Left ventricle myocardium inferior (tissue), 1 donor: ENCODE measurements at regions of chr3 and their contacts with region 1.

Region 1: DNA sequence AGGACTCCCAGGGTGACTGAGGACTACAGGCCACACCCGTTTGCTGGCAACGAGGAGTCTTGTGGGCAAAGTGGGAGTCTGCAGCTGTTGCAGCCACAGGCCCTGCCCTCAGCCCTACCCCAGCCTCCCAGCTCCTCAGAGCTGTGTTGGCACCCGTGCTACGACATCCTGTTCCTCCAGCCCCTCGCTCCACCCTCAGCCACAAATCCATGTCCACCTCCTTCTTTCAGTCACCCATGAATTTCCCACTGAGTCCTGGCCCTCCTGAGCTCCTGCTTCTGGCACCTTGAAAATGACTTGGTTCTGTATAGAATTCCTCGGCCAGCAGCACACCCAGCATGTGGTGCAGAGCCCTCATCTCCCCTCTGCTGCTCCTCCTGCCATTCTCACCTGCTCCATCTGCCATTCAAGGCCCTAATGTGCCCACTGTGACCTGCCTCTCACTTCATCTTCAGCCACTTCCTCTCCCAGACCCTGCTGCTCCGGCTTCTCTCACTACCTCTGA is 20.9 kb upstream of the VILL start:
- DNase-seq: no peak
- H3K4me3 ChIP-seq: no peak overlapping the region
- H3K27ac ChIP-seq: peak overlapping the region; percentile 72
- H3K4me1 ChIP-seq: peaks cover 49% of the 10 kb centered on the region
- H3K27me3 ChIP-seq: no peaks in the 10 kb centered on the region
- CTCF ChIP-seq: no peak

Region 2: DNA sequence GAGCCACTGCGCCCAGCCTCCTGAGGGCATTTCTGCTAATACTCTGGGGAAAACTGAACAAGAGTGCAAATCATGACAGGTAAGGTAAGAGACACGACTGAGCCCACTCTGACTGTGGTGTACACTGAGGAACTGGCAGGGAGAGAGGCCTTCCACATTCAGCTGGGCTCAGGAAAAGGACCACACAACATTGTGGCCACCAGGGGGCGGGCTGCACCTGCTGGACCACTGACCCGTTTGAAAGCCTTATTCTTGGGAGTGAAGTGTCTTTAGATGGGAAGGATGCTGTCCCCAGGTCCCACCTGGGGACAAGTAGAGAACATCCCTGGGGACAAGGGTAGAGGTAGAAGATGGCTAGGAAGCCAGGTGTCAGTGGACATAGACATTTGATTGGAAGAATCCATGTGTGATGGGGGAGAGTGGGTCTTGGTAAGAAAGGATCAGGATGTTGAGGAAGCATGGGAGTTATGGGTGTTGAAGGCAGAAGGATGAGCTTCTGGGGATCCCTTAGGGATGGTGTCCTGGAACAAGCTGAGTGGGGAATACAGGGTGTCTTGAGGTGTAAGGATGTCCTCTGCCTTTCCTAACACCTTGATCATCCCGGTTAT is 114.2 kb before region 1 on chr3:
- intact Hi-C with region 1: loop called (anchors 2 kb)
- DNase-seq: peak; percentile 89
- H3K4me3 ChIP-seq: no peak overlapping the region
- H3K27ac ChIP-seq: peak overlapping the region; percentile 58
- H3K4me1 ChIP-seq: peaks cover 28% of the 10 kb centered on the region
- H3K27me3 ChIP-seq: no peaks in the 10 kb centered on the region
- CTCF ChIP-seq: peak; percentile 95

Region 3: DNA sequence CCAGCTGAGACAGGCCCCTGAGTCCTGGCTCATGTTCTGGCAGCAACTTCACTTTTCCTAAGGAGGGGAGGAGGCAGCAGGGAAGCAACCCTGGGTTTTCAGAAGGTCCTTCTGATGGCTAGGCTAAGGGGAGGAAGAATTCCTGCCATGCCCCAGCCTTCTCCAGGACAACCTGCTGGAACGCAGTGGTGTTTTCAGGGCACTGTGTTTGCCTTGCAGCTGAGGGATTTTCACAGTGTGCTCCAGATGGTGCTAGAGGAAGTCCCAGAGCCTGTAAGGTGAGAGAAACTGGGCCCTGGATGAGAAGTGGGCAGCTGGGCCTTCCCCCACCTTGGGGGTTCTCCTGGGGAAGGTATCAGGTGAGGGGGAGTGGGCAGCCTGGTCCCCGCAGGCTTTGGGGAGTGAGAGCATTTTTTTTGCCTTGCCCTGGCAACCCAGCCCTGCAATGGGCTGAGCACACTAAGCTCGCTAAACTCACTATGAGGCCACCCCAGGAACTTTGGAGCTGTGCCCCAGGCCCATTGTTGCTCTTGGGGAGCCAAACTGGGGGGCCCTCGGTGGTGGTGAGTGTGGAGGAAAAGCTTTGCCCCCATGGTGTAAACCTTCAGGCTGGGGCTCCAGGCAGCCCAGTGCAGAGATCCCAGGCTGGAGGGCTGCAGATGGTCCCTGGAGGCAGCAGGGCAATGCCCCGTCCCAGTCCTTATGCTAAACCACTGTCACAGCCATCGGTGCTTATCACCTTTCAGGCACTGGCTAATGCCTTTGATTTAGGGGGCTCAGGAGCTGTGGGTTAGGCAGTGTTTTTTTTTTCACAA is 126.2 kb after region 1 on chr3:
- intact Hi-C with region 1: no loop called
- DNase-seq: no peak
- H3K4me3 ChIP-seq: no peak overlapping the region
- H3K27ac ChIP-seq: no peak overlapping the region
- H3K4me1 ChIP-seq: no peaks in the 10 kb centered on the region
- H3K27me3 ChIP-seq: peaks cover 63% of the 10 kb centered on the region
- CTCF ChIP-seq: no peak

Region 4: GRCh38 chr3:39065197-39065596 is 1095.5 kb after region 1 on chr3:
- intact Hi-C with region 1: no loop called
- DNase-seq: no peak
- H3K4me3 ChIP-seq: no peak overlapping the region
- H3K27ac ChIP-seq: no peak overlapping the region
- H3K4me1 ChIP-seq: no peaks in the 10 kb centered on the region
- H3K27me3 ChIP-seq: no peaks in the 10 kb centered on the region
- CTCF ChIP-seq: peak; percentile 39